Activated CD4-positive, alpha-beta memory T cell treated with anti-CD3 and anti-CD28 coated beads for 36 hours (primary cell): ENCODE measurements at regions of chr4 and their contacts with region 1.

Region 1: DNA sequence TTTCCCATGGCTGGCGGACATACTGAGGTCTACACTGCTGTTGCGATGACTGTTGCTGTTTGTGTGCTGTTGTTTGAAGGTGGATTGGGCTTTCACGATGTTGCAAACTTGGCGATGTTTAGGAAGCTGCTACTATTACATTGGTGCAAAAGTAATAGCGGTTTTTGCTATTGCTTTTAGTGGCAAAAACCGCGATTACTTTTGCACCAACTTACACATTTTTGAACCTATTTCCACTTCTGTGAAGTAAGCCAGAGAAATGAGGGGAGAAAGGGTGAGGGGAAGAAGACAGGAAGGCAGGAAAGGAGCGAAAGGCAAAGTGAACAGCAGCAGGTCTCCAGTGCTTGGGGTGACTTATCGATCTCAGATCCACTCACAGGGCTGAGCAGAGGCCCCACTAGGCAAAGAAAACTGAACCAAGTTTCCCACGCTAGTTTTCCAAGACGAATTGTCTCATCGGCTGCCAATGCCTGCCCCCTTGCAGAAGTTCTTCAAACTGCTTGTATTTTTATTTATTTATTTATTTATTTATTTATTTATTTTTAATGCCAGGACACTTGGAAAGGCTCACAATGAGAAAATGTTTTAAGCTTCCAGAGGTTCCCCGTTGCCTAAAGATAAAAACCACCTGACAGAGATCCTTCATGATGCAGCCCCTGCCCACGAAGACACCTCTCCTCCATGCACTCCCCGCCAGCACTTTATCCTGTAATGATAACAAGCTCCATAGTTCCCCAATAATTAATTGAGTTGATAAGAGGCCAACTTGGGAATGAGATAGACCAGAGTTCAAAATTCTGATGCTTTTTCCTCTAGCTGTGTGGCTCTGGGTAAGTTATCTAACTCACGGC is 43.3 kb downstream of the QDPR start:
- DNase-seq: no peak
- H3K4me3 Mint-ChIP-seq: no peak overlapping the region
- H3K27ac Mint-ChIP-seq: no peak overlapping the region
- H3K4me1 Mint-ChIP-seq: no peaks in the 10 kb centered on the region
- H3K27me3 Mint-ChIP-seq: no peaks in the 10 kb centered on the region

Region 2: DNA sequence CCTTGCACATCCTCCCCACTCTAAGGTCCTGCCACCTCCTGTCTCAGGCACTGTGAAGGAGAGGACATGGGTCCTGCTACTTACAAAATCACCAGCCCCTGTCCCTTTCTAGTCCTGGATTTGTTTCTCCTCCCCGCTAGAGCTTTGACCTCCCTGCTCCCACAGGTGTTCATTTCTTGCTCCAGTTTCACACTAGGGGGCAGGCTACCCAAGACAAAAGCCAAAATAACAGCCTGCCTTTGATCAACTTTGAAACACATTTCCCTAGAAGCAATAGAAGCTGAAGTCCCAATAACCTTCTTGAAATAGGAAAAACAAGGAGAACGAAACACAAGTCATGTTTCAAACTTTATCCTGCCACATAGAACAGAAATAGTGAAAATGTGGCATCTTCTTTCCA is 121.2 kb before region 1 on chr4:
- CTCF ChIA-PET with region 1: interaction called, 4 read pairs
- POLR2A ChIA-PET with region 1: no interaction called
- intact Hi-C with region 1: loop called (anchors 1 kb)
- DNase-seq: peak; percentile 42
- H3K4me3 Mint-ChIP-seq: no peak overlapping the region
- H3K27ac Mint-ChIP-seq: no peak overlapping the region
- H3K4me1 Mint-ChIP-seq: no peaks in the 10 kb centered on the region
- H3K27me3 Mint-ChIP-seq: no peaks in the 10 kb centered on the region

Region 3: DNA sequence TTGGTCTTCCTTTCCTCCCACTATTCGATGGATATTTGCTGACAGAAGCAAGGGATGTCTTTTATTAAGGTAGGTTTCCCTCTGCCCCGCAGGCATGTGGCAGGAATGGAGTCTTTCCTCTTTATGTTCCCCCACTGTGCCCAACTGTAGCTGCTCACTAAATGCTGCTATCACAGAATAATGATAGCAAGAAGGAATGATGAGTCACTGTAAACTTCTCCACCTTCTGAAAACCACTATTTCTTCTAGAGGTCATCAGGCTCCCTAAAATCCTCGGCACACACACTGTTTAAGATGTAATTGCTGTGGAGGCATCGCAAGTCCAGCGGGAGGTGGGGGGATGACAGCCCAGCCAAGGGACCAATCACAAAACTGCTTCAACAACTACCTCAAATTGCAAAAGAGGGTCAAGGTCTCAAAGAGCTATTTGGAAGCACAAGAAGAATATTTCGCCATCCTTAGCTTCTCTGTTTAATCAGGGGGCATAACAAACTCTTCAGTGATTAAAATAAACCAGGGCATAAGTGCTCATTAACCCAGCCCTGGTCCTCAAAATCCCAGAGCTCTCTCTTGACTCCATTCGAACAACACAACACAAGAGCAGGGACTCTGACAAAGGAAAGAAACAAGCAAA is 29.4 kb after region 1 on chr4:
- CTCF ChIA-PET with region 1: interaction called, 11 read pairs
- POLR2A ChIA-PET with region 1: no interaction called
- intact Hi-C with region 1: no loop called
- DNase-seq: no peak
- H3K4me3 Mint-ChIP-seq: no peak overlapping the region
- H3K27ac Mint-ChIP-seq: no peak overlapping the region
- H3K4me1 Mint-ChIP-seq: peaks cover 22% of the 10 kb centered on the region
- H3K27me3 Mint-ChIP-seq: no peaks in the 10 kb centered on the region